ENCODE measurements at regions of chr3 and their contacts with region 1.

Region 1: GRCh38 chr3:27134165-27134796 is 234.9 kb downstream of the NEK10 start:
- DNase-seq: peak; percentile 57
- ATAC-seq: peak; percentile 75 to 84

Region 2: DNA sequence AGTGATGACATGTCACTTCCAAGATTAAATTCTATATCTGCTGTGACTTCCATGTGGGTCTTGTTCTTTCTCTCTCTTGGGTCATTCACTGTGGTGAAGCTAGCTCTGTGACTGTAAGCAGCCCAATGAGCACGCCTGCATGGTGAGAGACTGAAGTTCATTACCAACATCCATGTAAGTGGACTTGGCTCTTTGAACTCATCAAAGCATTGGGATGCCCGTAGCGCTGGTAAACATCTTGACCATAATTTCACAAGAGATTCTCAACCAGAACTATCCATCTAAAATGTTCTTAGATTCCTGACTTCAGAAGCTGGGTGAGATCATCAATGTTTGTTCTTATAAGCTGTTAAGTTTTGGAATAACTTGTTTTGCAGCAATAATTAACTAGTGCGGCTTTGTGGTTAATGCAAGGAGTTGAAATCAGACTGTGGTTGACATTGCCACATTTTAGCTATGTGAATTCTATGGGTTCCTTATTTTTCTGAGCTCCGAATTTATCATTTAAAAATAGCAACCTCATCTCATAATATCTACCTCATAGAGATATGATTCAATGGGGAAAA is 543.3 kb before region 1 on chr3:
- intact Hi-C with region 1: no loop called
- DNase-seq: no peak
- ATAC-seq: no peak

Region 3: DNA sequence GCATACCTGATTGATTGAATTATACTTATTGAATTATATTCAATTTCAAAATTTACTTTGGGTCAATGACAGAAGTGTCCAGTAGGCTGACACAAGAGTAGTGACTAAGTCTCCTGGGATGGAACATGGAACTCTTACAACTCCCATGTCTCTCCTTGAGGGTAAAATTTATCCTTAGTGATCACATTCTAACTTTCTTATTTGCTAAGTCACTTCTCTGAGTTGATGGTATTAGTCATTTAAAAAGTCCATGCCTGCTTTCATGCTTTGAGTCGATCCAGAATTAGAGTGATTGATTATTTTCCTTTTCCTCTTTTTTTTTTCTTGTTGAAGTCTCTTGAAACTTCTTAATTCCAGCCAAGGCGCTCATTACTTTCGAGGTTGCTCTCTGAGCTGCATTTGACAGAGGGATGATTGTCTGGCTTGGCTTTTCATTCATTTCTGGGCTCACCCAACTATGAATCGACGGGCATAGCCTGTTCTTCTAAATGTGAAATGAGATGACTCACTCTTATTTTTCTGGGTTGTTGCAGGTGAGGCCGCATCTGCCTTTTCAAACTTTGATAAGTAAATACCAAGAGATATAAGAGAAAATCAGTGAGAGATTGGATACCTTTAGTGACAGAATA is 476.8 kb before region 1 on chr3:
- intact Hi-C with region 1: no loop called
- DNase-seq: no peak
- ATAC-seq: peak in 1 of 2 donors; percentile 37

Region 4: DNA sequence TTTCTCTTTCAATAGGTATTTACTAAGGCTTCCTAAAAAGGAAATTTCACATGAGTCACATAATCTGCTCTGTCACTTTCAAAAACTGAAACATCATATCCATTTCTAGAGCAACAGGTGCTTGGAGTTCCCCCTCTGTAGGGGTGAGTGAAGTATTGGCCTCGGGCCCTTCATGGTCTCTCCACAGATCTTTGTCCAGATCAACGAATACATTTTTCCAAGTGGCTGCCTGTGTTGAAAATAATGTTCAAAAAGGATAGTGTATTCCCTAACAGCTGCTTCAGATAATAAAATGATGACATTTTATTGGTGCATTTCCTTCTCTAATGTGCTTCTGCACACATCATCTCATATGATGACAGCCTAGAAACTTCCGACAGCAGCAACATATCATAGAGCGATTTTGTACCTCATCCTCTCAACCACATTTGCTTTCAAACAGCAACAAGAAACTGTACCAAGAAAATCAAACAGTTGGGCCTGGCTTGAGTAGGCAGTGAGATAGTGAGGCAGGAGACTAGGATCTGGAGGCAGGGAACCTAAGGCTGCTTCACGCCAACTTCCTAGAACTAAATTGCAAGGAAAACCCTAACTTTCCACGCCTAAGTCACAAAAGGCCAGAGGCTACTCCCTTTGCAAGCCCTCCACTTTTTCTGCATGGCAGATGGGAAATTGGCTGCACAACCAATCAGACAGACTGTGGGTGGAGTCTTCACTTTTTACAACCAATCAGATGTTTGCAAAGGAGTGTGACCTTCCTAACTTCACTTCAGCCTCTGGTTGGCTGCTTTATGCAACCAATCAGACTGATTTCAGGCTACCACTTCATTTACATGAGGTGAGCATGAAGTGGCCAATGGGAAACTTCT is 171.6 kb before region 1 on chr3:
- intact Hi-C with region 1: no loop called
- DNase-seq: no peak
- ATAC-seq: peak in 1 of 2 donors; percentile 51

Region 5: DNA sequence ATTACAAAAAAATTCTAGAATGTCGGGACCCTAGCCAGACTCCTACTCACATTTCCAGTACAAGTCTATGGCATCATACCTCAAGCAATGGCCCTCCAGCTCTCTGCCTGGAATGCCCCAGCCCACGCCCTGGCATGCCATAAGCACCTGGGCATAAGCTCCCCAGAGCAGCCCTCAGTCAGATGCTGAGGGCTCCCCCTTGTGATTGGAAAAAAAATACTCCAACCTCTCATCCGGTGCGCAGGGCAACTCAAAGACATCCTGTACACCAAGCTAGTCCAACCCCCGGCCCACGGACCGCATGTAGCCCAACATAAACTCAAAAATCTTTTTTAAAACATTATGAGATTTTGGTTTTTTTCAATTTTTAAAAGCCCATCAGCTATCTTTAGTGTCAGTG is 119.5 kb after region 1 on chr3:
- intact Hi-C with region 1: loop called (anchors 2 to 10 kb)
- DNase-seq: no peak
- ATAC-seq: peak in 1 of 2 donors; percentile 56

Region 6: DNA sequence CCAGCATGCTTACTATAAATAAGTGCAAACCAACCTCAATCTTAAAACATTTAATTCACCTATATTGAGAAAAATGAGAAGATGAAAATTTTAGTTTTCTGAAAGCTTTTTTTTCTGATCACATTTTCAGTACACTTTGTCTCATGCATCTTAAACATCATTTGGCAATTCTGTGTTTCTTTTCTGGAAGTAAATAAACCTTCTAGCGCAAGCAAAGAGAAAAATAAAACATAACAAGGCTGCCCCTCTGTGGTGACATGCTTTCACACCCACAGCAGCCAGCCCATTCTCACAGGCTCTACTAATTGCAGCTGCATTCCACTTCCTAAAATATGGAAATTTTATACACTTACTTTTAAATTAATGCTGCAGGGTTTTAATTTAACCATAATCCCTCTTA is 144.8 kb after region 1 on chr3:
- intact Hi-C with region 1: loop called in 1 of 2 experiments (anchors 2 kb)
- DNase-seq: no peak
- ATAC-seq: peak in 1 of 2 donors; percentile 57